ENCODE measurements at regions of chr3 and their contacts with region 1.

Region 1: DNA sequence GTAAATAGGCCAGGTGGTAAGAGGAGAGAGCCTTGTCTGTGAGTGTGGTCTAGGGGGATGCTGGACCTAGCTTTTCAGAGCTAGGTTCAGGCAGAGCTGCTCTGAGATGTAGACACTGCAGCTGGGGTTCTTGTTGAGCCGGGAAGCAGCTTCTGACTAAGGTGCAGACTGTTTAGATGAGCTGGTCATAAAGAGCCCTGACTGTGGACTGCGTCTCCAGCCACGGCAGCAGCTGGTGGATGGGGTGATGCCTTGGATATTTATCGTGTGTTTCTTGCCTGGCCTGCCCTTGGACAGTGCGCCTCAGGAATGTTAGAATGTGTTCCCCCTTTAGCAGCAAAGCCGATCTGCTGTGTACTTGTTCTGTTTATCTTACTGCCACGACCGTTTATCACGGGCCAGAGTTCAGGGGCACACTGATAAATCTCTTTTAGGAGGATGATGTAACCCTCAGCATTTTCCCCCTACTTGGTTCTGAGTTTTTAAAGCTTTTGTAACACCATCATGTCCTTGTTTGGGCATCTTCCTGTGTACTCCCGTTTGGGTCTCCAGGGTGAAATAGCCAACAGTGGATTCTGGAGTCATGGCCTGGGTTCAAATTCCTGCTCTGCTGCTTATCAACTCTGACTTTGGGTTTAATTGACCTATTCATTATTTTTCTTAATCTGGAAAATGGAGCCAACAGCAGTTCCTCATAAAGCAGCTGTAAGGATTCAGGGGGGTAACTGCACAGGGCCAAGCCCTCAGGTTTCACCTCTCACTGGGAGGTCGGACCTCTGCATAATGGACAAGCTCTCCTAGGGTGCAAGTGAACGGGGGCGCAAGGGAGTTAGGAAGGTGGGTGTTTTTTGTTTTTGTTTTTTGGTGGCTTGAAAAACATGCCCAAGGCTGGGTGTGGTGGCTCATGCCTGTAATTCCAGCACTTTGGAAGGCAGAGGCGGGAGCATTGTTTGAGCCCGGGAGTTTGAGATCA is 51.4 kb downstream of the FLNB start:
- DNase-seq: peak; percentile 97
- H3K4me3 ChIP-seq: peak overlapping the region; percentile 1; the same call in 1 of the 2 replicates
- H3K27ac ChIP-seq: peak overlapping the region; percentile 98
- H3K27me3 ChIP-seq: no peaks in the 10 kb centered on the region
- CTCF ChIP-seq: no peak

Region 2: GRCh38 chr3:58013973-58014649 is 45.5 kb before region 1 on chr3:
- CTCF ChIA-PET with region 1: interaction called, 3 read pairs
- POLR2A ChIA-PET with region 1: interaction called, 16 read pairs
- DNase-seq: peak; percentile 76
- H3K4me3 ChIP-seq: peak overlapping the region; percentile 18; the same call in 1 of the 2 replicates
- H3K27ac ChIP-seq: peak overlapping the region; percentile 68
- H3K27me3 ChIP-seq: no peaks in the 10 kb centered on the region
- CTCF ChIP-seq: no peak

Region 3: DNA sequence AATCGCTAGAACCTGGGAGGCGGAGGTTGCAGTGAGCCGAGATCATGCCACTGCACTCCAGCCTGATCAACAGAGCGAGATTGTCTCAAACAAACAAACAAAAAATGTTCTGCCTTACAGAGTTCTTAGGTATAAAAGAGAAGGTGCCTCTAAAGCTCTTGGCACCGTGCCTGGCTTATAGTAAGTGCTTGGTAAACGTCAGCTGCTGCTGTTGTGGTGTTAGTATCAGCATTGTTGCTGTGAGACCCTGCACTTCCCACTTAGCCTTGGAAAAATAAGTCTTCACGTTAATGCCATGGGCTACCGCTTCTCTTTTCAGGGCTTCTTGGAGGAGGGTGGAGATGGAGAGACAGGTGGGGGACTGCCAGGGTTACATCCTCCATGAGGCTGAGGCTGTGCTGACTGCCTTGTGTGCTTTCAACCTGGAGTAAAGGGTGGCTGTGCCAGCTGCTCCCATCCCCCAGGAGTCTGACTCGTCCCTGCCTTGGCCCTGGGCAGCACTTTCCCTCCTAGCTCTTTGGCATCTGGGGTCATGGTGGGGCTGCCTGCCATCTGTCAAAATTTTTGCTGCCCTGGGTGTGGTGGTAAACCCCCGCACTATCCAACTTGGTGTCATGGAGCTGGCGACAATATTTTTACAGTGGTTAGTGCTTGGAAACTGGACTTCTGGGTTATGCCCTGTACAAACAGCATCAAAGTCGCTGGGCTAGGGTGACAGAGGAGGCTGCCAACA is 33.6 kb before region 1 on chr3:
- CTCF ChIA-PET with region 1: no interaction called
- POLR2A ChIA-PET with region 1: interaction called, 14 read pairs
- DNase-seq: no peak
- H3K4me3 ChIP-seq: no peak overlapping the region
- H3K27ac ChIP-seq: no peak overlapping the region
- H3K27me3 ChIP-seq: no peaks in the 10 kb centered on the region
- CTCF ChIP-seq: no peak

Region 4: GRCh38 chr3:58041654-58042324 is 17.8 kb before region 1 on chr3:
- CTCF ChIA-PET with region 1: no interaction called
- POLR2A ChIA-PET with region 1: interaction called, 28 read pairs
- DNase-seq: peak; percentile 71
- H3K4me3 ChIP-seq: no peak overlapping the region
- H3K27ac ChIP-seq: peak overlapping the region; percentile 79
- H3K27me3 ChIP-seq: no peaks in the 10 kb centered on the region
- CTCF ChIP-seq: no peak

Region 5: DNA sequence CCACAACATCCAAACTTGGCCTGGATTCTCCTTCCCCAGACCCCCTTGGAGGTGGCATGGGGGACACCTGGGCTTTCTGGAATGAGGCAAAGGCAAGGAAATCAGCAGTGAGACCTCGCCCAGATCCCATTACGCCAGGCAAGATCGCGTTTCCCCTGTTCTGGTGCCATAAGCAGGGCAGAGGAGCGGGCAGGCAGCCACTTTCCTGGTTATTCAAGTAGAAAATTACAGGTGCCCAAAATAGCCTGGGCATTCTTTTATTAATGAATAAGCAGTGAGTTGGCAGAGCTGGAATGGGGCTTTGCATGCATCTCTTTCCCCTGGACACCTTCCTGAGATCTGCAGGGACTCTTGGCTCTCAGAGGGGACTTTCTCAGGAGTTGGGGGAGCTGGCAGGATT is 549.0 kb after region 1 on chr3:
- CTCF ChIA-PET with region 1: no interaction called
- POLR2A ChIA-PET with region 1: no interaction called
- DNase-seq: no peak
- H3K4me3 ChIP-seq: no peak overlapping the region
- H3K27ac ChIP-seq: no peak overlapping the region
- H3K27me3 ChIP-seq: peaks cover 26% of the 10 kb centered on the region
- CTCF ChIP-seq: no peak

Measured in AG04450 (cell line).